CD4-positive, alpha-beta T cell (primary cell): ENCODE measurements at regions of chr13 and their contacts with region 1.

Region 1: GRCh38 chr13:21638319-21639282 is 32.3 kb upstream of the FGF9 start:
- DNase-seq: peak in 9 of 14 experiments; percentile 8 to 67 (median 20)
- ATAC-seq: no peak
- H3K4me3 ChIP-seq: no peak overlapping the region
- H3K4me3 Mint-ChIP-seq: no peak overlapping the region
- H3K27ac ChIP-seq: no peak overlapping the region
- H3K27ac Mint-ChIP-seq: no peak overlapping the region
- H3K4me1 ChIP-seq: no peaks in the 10 kb centered on the region
- H3K4me1 Mint-ChIP-seq: no peaks in the 10 kb centered on the region
- H3K27me3 ChIP-seq: peaks cover 0 to 8% of the 10 kb centered on the region in 2 experiments
- H3K27me3 Mint-ChIP-seq: peaks cover 19% of the 10 kb centered on the region
- CTCF ChIP-seq: peak; percentile 96

Region 2: GRCh38 chr13:21443171-21443570 is 195.4 kb before region 1 on chr13:
- CTCF ChIA-PET with region 1: no interaction called
- POLR2A ChIA-PET with region 1: no interaction called
- intact Hi-C with region 1: no loop called
- DNase-seq: no peak
- ATAC-seq: no peak
- H3K4me3 ChIP-seq: no peak overlapping the region
- H3K4me3 Mint-ChIP-seq: no peak overlapping the region
- H3K27ac ChIP-seq: no peak overlapping the region
- H3K27ac Mint-ChIP-seq: no peak overlapping the region
- H3K4me1 ChIP-seq: no peaks in the 10 kb centered on the region
- H3K4me1 Mint-ChIP-seq: peaks cover 63% of the 10 kb centered on the region
- H3K27me3 ChIP-seq: no peaks in the 10 kb centered on the region
- H3K27me3 Mint-ChIP-seq: no peaks in the 10 kb centered on the region
- CTCF ChIP-seq: no peak

Region 3: GRCh38 chr13:21476893-21477472 is 161.6 kb before region 1 on chr13:
- CTCF ChIA-PET with region 1: no interaction called
- POLR2A ChIA-PET with region 1: no interaction called
- intact Hi-C with region 1: no loop called
- DNase-seq: peak; percentile 64 to 89 (median 72)
- ATAC-seq: peak; percentile 80
- H3K4me3 ChIP-seq: peak overlapping the region; percentile 37
- H3K4me3 Mint-ChIP-seq: peak overlapping the region; percentile 78
- H3K27ac ChIP-seq: no peak overlapping the region
- H3K27ac Mint-ChIP-seq: no peak overlapping the region
- H3K4me1 ChIP-seq: peaks cover 6% of the 10 kb centered on the region
- H3K4me1 Mint-ChIP-seq: peaks cover 17% of the 10 kb centered on the region
- H3K27me3 ChIP-seq: no peaks in the 10 kb centered on the region
- H3K27me3 Mint-ChIP-seq: peaks cover 10% of the 10 kb centered on the region
- CTCF ChIP-seq: peak; percentile 97

Region 4: DNA sequence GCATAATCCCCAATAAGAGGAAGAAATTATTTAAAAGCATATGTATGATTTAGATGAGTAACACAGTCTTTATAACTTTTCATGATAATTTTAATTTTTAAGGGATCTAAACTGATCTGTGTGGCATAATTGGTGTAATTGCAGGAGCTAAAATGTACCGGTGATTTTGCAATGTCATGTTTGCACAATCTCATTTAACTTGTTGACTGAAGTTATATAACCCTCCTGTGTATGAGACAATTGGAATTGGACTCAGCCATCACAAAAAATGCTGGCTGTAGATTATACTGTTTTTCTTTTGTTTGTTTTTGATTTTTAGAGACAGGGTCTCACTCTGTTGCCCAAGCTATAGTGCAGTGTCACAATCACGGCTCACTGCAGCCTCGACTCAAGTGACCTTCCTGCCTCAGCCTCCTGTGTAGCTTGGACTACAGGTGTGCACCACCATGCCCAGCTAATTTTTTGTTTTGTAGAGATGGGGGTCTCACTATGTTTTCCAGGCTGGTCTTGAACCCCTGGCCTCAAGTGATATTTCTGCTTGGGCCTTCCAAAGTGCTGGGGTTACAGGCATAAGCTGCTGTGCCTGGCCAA is 58.4 kb after region 1 on chr13:
- CTCF ChIA-PET with region 1: no interaction called
- POLR2A ChIA-PET with region 1: no interaction called
- intact Hi-C with region 1: no loop called
- DNase-seq: no peak
- ATAC-seq: no peak
- H3K4me3 ChIP-seq: no peak overlapping the region
- H3K4me3 Mint-ChIP-seq: no peak overlapping the region
- H3K27ac ChIP-seq: no peak overlapping the region
- H3K27ac Mint-ChIP-seq: no peak overlapping the region
- H3K4me1 ChIP-seq: no peaks in the 10 kb centered on the region
- H3K4me1 Mint-ChIP-seq: no peaks in the 10 kb centered on the region
- H3K27me3 ChIP-seq: peaks cover 0 to 3% of the 10 kb centered on the region in 2 experiments
- H3K27me3 Mint-ChIP-seq: peaks cover 4% of the 10 kb centered on the region
- CTCF ChIP-seq: no peak

Region 5: DNA sequence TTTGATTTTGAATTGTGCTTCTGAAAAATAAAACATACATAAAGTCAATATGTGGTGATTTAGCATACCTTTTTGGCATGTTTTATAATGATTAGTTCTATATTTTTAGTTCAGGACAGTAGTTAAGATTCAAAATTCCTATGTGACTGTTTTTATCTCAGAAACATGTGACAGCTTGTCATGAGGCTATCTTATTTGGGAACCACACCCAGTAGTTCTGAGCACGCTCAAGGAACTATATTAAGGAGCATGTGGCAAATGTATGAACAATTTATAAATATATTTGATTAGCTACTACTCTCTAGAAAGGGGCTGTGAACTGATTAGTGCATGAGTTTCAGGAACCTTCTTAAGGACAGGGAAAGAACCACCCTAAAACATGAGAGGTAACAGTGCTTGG is 71.1 kb after region 1 on chr13:
- CTCF ChIA-PET with region 1: no interaction called
- POLR2A ChIA-PET with region 1: no interaction called
- intact Hi-C with region 1: no loop called
- DNase-seq: no peak
- ATAC-seq: no peak
- H3K4me3 ChIP-seq: no peak overlapping the region
- H3K4me3 Mint-ChIP-seq: no peak overlapping the region
- H3K27ac ChIP-seq: no peak overlapping the region
- H3K27ac Mint-ChIP-seq: no peak overlapping the region
- H3K4me1 ChIP-seq: no peaks in the 10 kb centered on the region
- H3K4me1 Mint-ChIP-seq: no peaks in the 10 kb centered on the region
- H3K27me3 ChIP-seq: peaks cover 0 to 7% of the 10 kb centered on the region in 2 experiments
- H3K27me3 Mint-ChIP-seq: peaks cover 51% of the 10 kb centered on the region
- CTCF ChIP-seq: no peak

Region 6: GRCh38 chr13:21849323-21849722 is 210.7 kb after region 1 on chr13:
- CTCF ChIA-PET with region 1: no interaction called
- POLR2A ChIA-PET with region 1: no interaction called
- intact Hi-C with region 1: loop called in 1 of 2 experiments (anchors 5 kb)
- DNase-seq: peak in 5 of 14 experiments; percentile 6 to 61 (median 43)
- ATAC-seq: peak; percentile 74
- H3K4me3 ChIP-seq: no peak overlapping the region
- H3K4me3 Mint-ChIP-seq: no peak overlapping the region
- H3K27ac ChIP-seq: no peak overlapping the region
- H3K27ac Mint-ChIP-seq: no peak overlapping the region
- H3K4me1 ChIP-seq: no peaks in the 10 kb centered on the region
- H3K4me1 Mint-ChIP-seq: no peaks in the 10 kb centered on the region
- H3K27me3 ChIP-seq: peaks cover 0 to 2% of the 10 kb centered on the region in 2 experiments
- H3K27me3 Mint-ChIP-seq: no peaks in the 10 kb centered on the region
- CTCF ChIP-seq: peak; percentile 74

Region 7: GRCh38 chr13:22061351-22061805 is 422.8 kb after region 1 on chr13:
- CTCF ChIA-PET with region 1: interaction called, 5 read pairs
- POLR2A ChIA-PET with region 1: interaction called, 4 read pairs
- intact Hi-C with region 1: loop called (anchors 5 to 10 kb)
- DNase-seq: peak; percentile 25 to 80 (median 55)
- ATAC-seq: peak; percentile 81
- H3K4me3 ChIP-seq: no peak overlapping the region
- H3K4me3 Mint-ChIP-seq: peak overlapping the region; percentile 61
- H3K27ac ChIP-seq: peak overlapping the region; percentile 83 to 93
- H3K27ac Mint-ChIP-seq: peak overlapping the region; percentile 95
- H3K4me1 ChIP-seq: peaks cover 74% of the 10 kb centered on the region
- H3K4me1 Mint-ChIP-seq: peaks cover 85% of the 10 kb centered on the region
- H3K27me3 ChIP-seq: no peaks in the 10 kb centered on the region
- H3K27me3 Mint-ChIP-seq: no peaks in the 10 kb centered on the region
- CTCF ChIP-seq: peak; percentile 38

Region 8: DNA sequence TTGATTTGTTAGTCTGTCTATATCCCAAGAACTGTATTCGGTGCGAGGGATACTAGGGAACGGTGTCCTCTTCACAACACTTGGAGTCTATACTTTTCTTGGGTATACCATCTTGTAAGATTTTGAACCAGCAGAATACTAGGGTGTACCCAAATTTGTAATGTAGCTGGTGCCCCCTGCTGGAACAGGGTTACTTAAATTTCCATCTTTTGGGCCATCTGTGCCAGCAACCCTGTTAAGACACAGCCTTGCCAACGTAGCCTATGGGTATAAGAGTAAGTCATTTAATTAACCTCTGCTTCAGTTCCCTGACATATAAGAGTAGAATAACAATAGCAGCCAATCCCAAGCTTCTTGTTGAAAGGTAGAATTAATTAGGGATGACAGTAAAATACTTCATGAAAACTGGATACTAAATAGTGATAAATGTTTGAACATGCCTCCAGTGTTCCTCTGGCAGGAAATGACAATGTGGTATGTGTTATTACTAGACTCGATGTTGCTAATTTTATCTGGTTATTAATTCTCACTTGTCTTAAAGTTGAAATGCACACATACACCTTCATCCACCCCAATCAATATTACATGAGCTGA is 639.8 kb after region 1 on chr13:
- CTCF ChIA-PET with region 1: interaction called, 5 read pairs
- POLR2A ChIA-PET with region 1: interaction called, 4 read pairs
- intact Hi-C with region 1: loop called (anchors 1 kb)
- DNase-seq: peak; percentile 51 to 77 (median 63)
- ATAC-seq: peak; percentile 59
- H3K4me3 ChIP-seq: no peak overlapping the region
- H3K4me3 Mint-ChIP-seq: no peak overlapping the region
- H3K27ac ChIP-seq: no peak overlapping the region
- H3K27ac Mint-ChIP-seq: no peak overlapping the region
- H3K4me1 ChIP-seq: no peaks in the 10 kb centered on the region
- H3K4me1 Mint-ChIP-seq: peaks cover 16% of the 10 kb centered on the region
- H3K27me3 ChIP-seq: no peaks in the 10 kb centered on the region
- H3K27me3 Mint-ChIP-seq: no peaks in the 10 kb centered on the region
- CTCF ChIP-seq: peak; percentile 71

Region 9: GRCh38 chr13:22757530-22758120 is 1119.0 kb after region 1 on chr13:
- CTCF ChIA-PET with region 1: no interaction called
- POLR2A ChIA-PET with region 1: no interaction called
- intact Hi-C with region 1: loop called in 1 of 2 experiments (anchors 5 kb)
- DNase-seq: peak in 1 of 14 experiments; percentile 1
- ATAC-seq: no peak
- H3K4me3 ChIP-seq: no peak overlapping the region
- H3K4me3 Mint-ChIP-seq: no peak overlapping the region
- H3K27ac ChIP-seq: no peak overlapping the region
- H3K27ac Mint-ChIP-seq: no peak overlapping the region
- H3K4me1 ChIP-seq: no peaks in the 10 kb centered on the region
- H3K4me1 Mint-ChIP-seq: no peaks in the 10 kb centered on the region
- H3K27me3 ChIP-seq: no peaks in the 10 kb centered on the region
- H3K27me3 Mint-ChIP-seq: peaks cover 8% of the 10 kb centered on the region
- CTCF ChIP-seq: no peak